ENCODE measurements at regions of chr2 and their contacts with region 1.

Region 1: GRCh38 chr2:84925724-84926376 is 20.4 kb downstream of the TMSB10 start:
- DNase-seq: peak; percentile 94 to 99 (median 97)
- ATAC-seq: peak; percentile 76 to 81
- H3K4me3 Mint-ChIP-seq: peak overlapping the region; percentile 89 to 100 (median 98)
- H3K27ac Mint-ChIP-seq: peak overlapping the region; percentile 94 to 100 (median 98)
- H3K4me1 Mint-ChIP-seq: peaks cover 24 to 54% (median 44%) of the 10 kb centered on the region in 4 donors
- H3K27me3 Mint-ChIP-seq: no peaks in the 10 kb centered on the region

Region 2: DNA sequence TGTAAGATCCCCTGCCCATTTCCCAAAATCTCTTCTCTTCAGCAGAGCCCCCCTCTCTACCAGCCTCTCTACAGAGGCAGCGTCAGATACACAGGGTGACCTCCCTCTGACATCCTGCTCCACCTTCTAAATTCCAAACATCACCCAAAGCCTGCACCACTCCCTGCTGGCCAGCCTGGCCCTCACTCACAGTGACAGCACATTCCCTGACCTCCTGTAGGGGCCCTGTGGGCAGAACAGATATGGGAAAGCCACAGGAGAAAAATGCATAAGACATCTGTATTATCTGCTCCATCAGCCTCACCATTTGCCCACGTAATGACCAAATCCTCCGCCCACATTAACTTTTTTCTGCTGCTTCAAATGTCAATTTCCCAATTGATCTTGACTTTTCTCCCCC is 85.5 kb before region 1 on chr2:
- POLR2A ChIA-PET with region 1: interaction called, 13 read pairs
- DNase-seq: peak in 1 of 10 donors; percentile 23
- ATAC-seq: peak; percentile 10 to 17
- H3K4me3 Mint-ChIP-seq: peak overlapping the region; percentile 64 to 92 (median 82)
- H3K27ac Mint-ChIP-seq: peak overlapping the region; percentile 93 to 98 (median 97)
- H3K4me1 Mint-ChIP-seq: peaks cover 60 to 93% (median 91%) of the 10 kb centered on the region in 4 donors
- H3K27me3 Mint-ChIP-seq: no peaks in the 10 kb centered on the region

Region 3: GRCh38 chr2:84881581-84882414 is 44.1 kb before region 1 on chr2:
- POLR2A ChIA-PET with region 1: interaction called, 72 read pairs
- DNase-seq: peak; percentile 67 to 92 (median 86)
- ATAC-seq: peak; percentile 62 to 68
- H3K4me3 Mint-ChIP-seq: peak overlapping the region; percentile 87 to 99 (median 94)
- H3K27ac Mint-ChIP-seq: peak overlapping the region; percentile 93 to 99 (median 98)
- H3K4me1 Mint-ChIP-seq: peaks cover 32 to 73% (median 57%) of the 10 kb centered on the region in 4 donors
- H3K27me3 Mint-ChIP-seq: peaks cover 0 to 2% (median 0%) of the 10 kb centered on the region in 5 donors

Region 4: GRCh38 chr2:84905181-84906107 is 20.4 kb before region 1 on chr2 and contains the start of gene TMSB10:
- POLR2A ChIA-PET with region 1: interaction called, 361 read pairs
- DNase-seq: peak; percentile 83 to 95 (median 92)
- ATAC-seq: peak; percentile 70 to 71
- H3K4me3 Mint-ChIP-seq: peak within 1 kb of the TSS; percentile 92 to 98 (median 96)
- H3K27ac Mint-ChIP-seq: peak within 1 kb of the TSS; percentile 91 to 98 (median 96)
- H3K4me1 Mint-ChIP-seq: peaks cover 37 to 78% (median 71%) of the 10 kb centered on the region in 4 donors
- H3K27me3 Mint-ChIP-seq: no peaks in the 10 kb centered on the region
- polyA plus RNA-seq, gene TMSB10: 6,950 to 8,855 (median 7,882) TPM

Region 5: DNA sequence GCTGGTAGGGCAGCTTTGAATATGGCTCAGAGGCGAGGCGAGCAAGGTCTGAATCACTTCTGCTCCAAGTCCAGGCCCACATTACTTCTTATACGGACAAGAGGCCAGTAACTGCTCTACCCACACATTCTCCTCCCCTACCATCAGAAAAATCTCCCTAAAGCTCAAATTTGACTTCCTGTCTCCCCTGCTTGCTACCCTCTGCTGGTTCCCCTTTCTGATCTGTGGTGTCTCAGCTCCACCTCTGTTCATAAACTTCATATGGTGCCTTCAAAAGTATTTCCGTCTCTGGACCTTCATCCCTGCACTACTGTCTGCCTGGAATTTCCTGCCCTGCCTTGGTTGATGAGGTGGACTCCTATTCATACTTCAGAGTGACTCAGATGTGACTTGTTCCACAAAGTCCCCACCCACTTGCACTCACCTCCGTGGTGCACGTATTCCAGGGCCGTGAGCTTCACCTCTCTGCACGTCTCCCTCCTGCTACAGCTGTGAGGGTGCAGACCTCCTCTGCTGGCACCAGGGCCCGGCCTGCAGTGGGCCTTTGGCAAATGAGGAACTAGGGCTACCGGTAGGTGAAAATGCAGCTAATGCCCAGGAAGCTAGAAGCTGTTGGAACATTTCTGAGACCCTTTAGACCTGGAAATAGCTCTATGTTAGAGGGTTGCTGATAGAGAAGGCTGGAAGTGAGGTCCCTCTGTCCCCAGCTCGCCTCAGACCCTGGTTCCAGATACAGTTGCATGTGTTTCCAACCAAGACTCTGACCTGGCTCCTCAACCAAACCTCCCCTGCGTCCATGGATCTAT is 20.6 kb after region 1 on chr2:
- POLR2A ChIA-PET with region 1: interaction called, 31 read pairs
- DNase-seq: peak in 9 of 10 donors; percentile 16 to 64 (median 32)
- ATAC-seq: peak; percentile 85 to 87
- H3K4me3 Mint-ChIP-seq: peak overlapping the region; percentile 62 to 82 (median 74)
- H3K27ac Mint-ChIP-seq: peak overlapping the region; percentile 66 to 95 (median 88)
- H3K4me1 Mint-ChIP-seq: peaks cover 20 to 41% (median 33%) of the 10 kb centered on the region in 4 donors
- H3K27me3 Mint-ChIP-seq: no peaks in the 10 kb centered on the region